ENCODE measurements at regions of chr17 and their contacts with region 1.

Region 1: DNA sequence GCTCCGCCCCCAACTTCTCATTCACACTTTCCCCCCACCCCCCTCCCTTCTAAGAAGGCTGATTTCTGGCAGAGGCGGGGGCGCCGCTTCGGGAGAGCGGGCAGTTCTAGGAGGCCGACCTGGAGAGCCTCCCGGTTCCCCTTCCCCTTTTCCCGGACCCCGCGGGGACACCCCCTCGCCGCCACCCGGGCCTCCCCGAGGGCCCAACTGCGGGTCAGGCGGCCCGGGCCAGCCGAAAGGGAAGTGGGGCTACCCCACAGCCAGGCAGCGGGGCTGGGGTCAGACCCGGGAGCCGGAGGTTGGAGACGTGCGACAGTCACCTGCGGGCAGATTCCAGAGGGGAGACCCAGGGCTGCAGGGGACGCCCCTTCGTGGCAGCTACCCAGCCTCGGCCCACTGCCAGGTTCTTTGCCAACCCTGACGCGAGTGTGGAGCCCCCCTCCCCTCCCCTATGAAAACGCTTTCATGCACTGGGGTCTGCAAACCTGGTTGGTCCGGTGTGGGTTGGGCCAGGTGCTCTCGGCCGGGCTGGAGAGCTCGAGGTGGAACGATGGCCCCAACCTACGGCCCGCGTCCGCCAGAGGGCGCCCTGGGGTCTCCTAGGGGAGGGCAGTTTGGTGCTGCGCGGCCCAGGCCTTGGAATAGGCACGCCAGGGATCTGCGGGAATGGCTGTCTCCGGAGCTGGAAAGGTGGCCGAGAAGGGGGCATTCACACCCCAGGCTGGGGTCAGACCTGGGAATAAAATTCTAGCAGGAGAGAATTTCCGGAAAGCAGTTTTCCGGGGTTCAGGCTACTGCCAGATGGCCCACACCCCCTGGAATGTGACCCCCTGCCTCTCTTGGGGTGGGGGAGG is 721 bp upstream of the SOCS3 start:
- DNase-seq: no peak
- H3K4me3 ChIP-seq: peak overlapping the region; percentile 87
- CTCF ChIP-seq: peak; percentile 99

Region 2: DNA sequence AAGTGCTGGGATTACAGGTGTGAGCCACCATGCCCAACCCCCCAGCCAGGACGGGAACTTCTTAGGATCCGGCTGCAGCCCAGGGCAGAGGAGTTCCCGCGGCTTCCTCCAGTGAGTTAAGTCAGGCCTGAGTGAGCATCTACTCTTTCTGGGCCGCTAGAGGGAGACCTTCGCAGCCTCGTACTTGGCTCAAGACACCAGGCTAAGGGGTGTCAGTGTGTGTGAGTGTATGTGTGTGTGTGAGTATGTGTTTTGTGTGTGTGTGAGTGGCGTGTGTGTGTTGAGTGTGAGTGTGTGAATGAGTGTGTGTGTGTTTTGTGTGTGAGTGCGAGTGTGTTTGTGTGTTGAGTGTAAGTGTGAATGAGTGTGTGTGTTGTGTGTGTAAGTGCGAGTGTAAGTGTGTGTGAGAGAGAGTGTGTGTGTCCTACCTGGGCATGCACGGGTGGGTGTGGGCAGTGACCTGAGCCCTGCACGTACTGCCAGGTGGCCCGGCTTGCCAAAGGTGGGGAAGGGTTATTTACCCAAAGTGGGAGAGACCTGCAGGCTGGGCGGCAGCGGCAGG is 70.7 kb before region 1 on chr17:
- CTCF ChIA-PET with region 1: interaction called, 52 read pairs
- POLR2A ChIA-PET with region 1: interaction called, 4 read pairs
- DNase-seq: peak; percentile 53
- H3K4me3 ChIP-seq: no peak overlapping the region
- CTCF ChIP-seq: peak; percentile 93

Region 3: DNA sequence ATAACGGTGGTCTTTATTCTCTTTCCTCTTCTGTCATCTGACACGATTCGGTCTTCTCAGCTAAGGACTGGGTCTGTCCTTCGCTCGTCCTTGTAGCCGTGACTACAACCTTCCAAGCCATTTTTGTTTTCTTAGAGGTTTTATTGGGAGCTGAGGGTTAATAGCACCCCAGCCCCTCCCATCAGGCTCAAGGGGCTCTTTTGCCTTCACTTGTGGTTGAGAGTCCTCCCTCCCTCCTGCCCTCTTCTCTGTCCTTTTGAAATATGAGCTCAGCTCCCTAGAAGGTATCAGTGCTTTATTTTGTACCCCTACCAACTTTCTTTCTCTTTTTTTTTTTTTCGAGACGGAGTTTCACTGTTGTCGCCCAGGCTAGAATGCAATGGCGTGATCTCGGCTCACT is 25.4 kb before region 1 on chr17:
- CTCF ChIA-PET with region 1: interaction called, 15 read pairs
- POLR2A ChIA-PET with region 1: interaction called, 9 read pairs
- DNase-seq: no peak
- H3K4me3 ChIP-seq: no peak overlapping the region
- CTCF ChIP-seq: no peak

Region 4: DNA sequence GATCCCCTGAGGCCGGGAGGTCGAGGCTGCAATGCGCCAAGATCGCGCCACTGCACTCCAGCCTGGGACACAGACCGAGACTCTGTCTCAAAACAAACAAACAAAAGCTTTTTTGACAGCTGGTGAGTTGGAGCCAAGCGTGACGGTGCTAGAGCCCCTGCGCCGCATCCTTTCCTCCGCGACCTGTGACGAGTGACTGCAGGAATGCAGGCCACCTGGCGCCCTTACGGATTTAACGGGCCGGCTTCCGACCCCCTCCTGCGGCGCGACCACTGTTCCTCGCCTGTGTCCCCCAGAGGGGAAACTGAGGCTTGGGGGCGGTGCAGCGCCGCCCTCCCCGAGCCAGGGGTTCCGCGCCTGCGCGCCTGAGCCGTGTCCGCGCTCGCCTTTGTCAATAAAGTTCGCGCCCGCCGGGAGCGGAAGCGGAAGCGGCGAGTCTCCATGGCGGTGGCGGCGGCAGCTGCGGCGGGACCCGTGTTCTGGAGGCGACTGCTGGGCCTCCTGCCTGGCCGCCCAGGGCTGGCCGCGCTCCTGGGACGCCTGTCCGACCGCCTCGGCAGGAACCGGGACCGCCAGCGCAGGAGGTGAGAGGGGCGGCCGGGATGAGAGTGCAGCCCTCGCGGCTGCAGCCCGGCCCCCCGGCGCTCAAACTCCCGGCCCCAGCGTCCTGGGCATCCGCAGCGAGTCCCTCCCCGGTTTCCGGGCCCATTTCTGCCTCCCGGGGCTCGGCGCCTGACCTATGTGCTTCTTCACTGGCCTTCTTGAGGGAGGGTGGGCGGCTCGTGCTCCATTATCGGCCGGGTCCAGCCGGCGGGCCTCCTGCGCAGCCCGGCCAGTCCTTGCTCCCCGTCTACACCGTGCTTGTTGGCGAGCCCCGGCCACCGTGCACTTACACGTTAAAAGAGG is 17.9 kb after region 1 on chr17 and contains the start of gene PGS1:
- CTCF ChIA-PET with region 1: interaction called, 120 read pairs
- POLR2A ChIA-PET with region 1: interaction called, 33 read pairs
- DNase-seq: no peak
- H3K4me3 ChIP-seq: peak within 1 kb of the TSS; percentile 81
- CTCF ChIP-seq: no peak

Region 5: DNA sequence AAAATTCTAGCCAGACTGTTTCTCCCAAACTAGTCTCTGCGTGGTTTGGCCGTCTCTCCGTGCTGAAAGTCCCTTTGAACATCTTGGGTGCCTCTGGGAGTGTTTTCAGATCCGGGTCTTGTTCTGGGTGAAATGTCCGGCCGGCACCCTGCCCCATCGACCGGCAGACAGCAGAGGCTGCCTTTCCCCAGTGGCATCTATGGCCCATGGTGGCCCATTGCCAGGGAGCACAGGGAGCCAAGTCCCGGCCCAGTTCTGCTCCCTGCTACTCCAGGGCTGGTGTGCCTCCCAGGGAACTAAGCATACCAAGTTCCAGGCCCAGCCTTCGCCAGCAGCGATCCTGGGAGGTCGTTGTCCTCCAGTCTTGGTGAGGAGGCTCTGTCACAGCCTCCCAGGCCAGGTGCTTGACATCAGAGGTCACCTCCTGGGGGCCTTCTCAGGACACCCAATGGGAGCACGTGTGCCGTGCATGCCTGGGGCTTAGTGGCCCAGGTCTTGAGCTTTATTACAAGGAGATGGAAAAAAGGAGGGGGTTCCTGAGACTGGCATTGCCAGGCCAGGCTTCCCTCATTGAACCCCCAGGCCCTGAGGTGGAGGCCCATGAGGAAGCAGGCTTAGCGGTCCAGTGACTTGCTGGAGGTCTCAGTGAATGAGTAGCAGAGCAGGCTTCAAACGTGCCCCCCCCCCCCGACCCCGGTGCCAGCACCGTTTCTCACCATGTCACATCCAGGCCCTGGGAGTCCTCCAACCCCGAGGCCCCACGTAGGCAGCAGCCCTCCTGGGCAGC is 71.8 kb after region 1 on chr17:
- CTCF ChIA-PET with region 1: interaction called, 11 read pairs
- POLR2A ChIA-PET with region 1: interaction called, 3 read pairs
- DNase-seq: no peak
- H3K4me3 ChIP-seq: no peak overlapping the region
- CTCF ChIP-seq: no peak

Measured in AG04449 (cell line).